B cell (primary cell): ENCODE measurements at regions of chr5 and their contacts with region 1.

Region 1: GRCh38 chr5:177351385-177352329 is at the start of gene LMAN2:
- DNase-seq: peak; percentile 97
- ATAC-seq: peak; percentile 99
- H3K4me3 ChIP-seq: peak within 1 kb of the TSS; percentile 85 to 97 (median 90)
- H3K4me3 Mint-ChIP-seq: peak within 1 kb of the TSS; percentile 96
- H3K27ac ChIP-seq: peak within 1 kb of the TSS; percentile 87 to 93
- H3K27ac Mint-ChIP-seq: peak within 1 kb of the TSS; percentile 100
- H3K4me1 ChIP-seq: peaks cover 32 to 38% of the 10 kb centered on the region in 2 donors
- H3K4me1 Mint-ChIP-seq: peaks cover 61% of the 10 kb centered on the region
- H3K27me3 ChIP-seq: no peaks in the 10 kb centered on the region
- H3K27me3 Mint-ChIP-seq: no peaks in the 10 kb centered on the region
- CTCF ChIP-seq: no peak
- total RNA-seq, gene LMAN2: 89.4 and 99.4 TPM in 2 replicates

Region 2: DNA sequence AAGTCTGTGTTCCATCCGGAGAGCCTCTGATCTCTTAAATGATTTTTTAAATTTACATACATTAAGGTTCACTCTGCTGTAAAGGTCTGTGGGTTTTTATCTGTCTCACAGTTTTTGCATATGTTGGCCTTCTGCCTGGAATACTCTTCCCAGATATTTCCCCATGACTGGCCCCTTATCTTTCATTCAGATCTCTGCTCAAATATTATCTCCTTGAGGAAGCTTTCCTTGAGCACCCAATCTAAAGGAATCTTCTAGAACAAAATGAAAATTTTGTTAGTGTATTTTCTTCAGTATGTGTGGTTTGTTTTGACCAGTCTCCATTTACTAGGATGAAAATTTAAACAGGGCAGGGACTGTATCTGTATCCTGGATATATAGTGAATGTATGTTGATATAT is 877.1 kb before region 1 on chr5:
- CTCF ChIA-PET with region 1: no interaction called
- POLR2A ChIA-PET with region 1: no interaction called
- intact Hi-C with region 1: no loop called
- DNase-seq: no peak
- ATAC-seq: no peak
- H3K4me3 ChIP-seq: no peak overlapping the region
- H3K4me3 Mint-ChIP-seq: no peak overlapping the region
- H3K27ac ChIP-seq: no peak overlapping the region
- H3K27ac Mint-ChIP-seq: no peak overlapping the region
- H3K4me1 ChIP-seq: no peaks in the 10 kb centered on the region
- H3K4me1 Mint-ChIP-seq: peaks cover 8% of the 10 kb centered on the region
- H3K27me3 ChIP-seq: no peaks in the 10 kb centered on the region
- H3K27me3 Mint-ChIP-seq: no peaks in the 10 kb centered on the region
- CTCF ChIP-seq: no peak

Region 3: GRCh38 chr5:177303121-177303924 is 48.3 kb before region 1 on chr5 and contains the starts of genes PRELID1 and RAB24:
- CTCF ChIA-PET with region 1: interaction called, 4 read pairs
- POLR2A ChIA-PET with region 1: interaction called, 3 read pairs
- intact Hi-C with region 1: loop called (anchors 1 kb)
- DNase-seq: peak; percentile 91
- ATAC-seq: peak; percentile 59
- H3K4me3 ChIP-seq: peak within 1 kb of the TSS; percentile 71 to 97 (median 91)
- H3K4me3 Mint-ChIP-seq: peak within 1 kb of the TSS; percentile 95
- H3K27ac ChIP-seq: peak within 1 kb of the TSS; percentile 45 to 81
- H3K27ac Mint-ChIP-seq: peak within 1 kb of the TSS; percentile 93
- H3K4me1 ChIP-seq: peaks cover 60 to 79% of the 10 kb centered on the region in 2 donors
- H3K4me1 Mint-ChIP-seq: peaks cover 76% of the 10 kb centered on the region
- H3K27me3 ChIP-seq: no peaks in the 10 kb centered on the region
- H3K27me3 Mint-ChIP-seq: no peaks in the 10 kb centered on the region
- CTCF ChIP-seq: peak; percentile 64
- total RNA-seq, gene PRELID1: 66.5 and 71.7 TPM in 2 replicates
- total RNA-seq, gene RAB24: 38.3 and 39.7 TPM in 2 replicates

Region 4: GRCh38 chr5:177362610-177363507 is 11.2 kb after region 1 on chr5:
- CTCF ChIA-PET with region 1: interaction called, 16 read pairs
- POLR2A ChIA-PET with region 1: interaction called, 14 read pairs
- intact Hi-C with region 1: no loop called
- DNase-seq: peak; percentile 75
- ATAC-seq: peak; percentile 77
- H3K4me3 ChIP-seq: peak overlapping the region in 4 of 5 experiments; percentile 35 to 52 (median 48)
- H3K4me3 Mint-ChIP-seq: peak overlapping the region; percentile 86
- H3K27ac ChIP-seq: peak overlapping the region; percentile 39 to 50
- H3K27ac Mint-ChIP-seq: peak overlapping the region; percentile 93
- H3K4me1 ChIP-seq: peaks cover 48 to 64% of the 10 kb centered on the region in 2 donors
- H3K4me1 Mint-ChIP-seq: peaks cover 63% of the 10 kb centered on the region
- H3K27me3 ChIP-seq: no peaks in the 10 kb centered on the region
- H3K27me3 Mint-ChIP-seq: no peaks in the 10 kb centered on the region
- CTCF ChIP-seq: no peak

Region 5: DNA sequence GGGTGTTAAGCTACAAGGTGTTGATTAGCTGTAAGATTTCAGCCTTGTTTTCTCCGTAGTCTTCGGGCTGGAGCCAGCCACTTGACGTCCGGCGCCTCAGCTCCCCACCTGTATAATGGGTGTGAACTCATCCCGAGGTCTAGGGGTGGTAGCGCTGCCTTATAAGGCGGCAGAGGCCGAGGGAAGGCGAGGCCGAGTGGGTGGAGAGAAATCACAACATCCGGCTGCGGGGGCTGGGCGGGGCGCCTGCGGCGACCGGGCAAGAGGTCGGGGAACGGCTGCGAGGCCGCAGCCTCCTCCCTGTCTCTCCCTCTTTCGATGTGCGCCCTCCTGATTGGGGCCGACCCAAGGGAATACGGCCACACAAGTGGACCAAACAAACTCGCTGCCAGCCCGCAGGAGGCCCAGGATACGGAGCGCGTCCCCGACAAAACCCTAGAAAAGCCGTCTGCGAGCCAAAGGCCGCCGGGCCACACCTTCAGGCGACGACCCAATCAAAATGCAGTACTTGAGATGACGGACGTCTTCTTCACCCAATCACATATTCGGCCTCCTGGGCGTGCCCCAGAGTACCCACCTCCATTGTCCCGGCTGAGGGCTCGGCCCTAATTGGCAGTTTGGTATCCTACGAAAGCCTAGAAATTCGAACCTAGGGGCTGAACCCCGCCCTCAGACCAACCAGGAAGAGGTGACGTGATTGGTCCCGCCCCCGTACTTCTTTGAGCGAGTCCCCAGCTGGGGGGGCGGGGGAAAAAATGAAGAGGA is 74.3 kb after region 1 on chr5:
- CTCF ChIA-PET with region 1: interaction called, 3 read pairs
- POLR2A ChIA-PET with region 1: interaction called, 3 read pairs
- intact Hi-C with region 1: loop called (anchors 1 kb)
- DNase-seq: peak; percentile 100
- ATAC-seq: peak; percentile 82
- H3K4me3 ChIP-seq: peak overlapping the region; percentile 28 to 74 (median 61)
- H3K4me3 Mint-ChIP-seq: peak overlapping the region; percentile 93
- H3K27ac ChIP-seq: peak overlapping the region; percentile 82 to 88
- H3K27ac Mint-ChIP-seq: peak overlapping the region; percentile 97
- H3K4me1 ChIP-seq: peaks cover 47 to 49% of the 10 kb centered on the region in 2 donors
- H3K4me1 Mint-ChIP-seq: peaks cover 49% of the 10 kb centered on the region
- H3K27me3 ChIP-seq: no peaks in the 10 kb centered on the region
- H3K27me3 Mint-ChIP-seq: no peaks in the 10 kb centered on the region
- CTCF ChIP-seq: no peak

Region 6: GRCh38 chr5:177599731-177600507 is 248.3 kb after region 1 on chr5 and contains the start of gene B4GALT7:
- CTCF ChIA-PET with region 1: interaction called, 3 read pairs
- POLR2A ChIA-PET with region 1: interaction called, 4 read pairs
- intact Hi-C with region 1: loop called (anchors 2 kb)
- DNase-seq: peak; percentile 88
- ATAC-seq: peak; percentile 88
- H3K4me3 ChIP-seq: peak within 1 kb of the TSS; percentile 61 to 87 (median 81)
- H3K4me3 Mint-ChIP-seq: peak within 1 kb of the TSS; percentile 95
- H3K27ac ChIP-seq: peak within 1 kb of the TSS; percentile 74 to 94
- H3K27ac Mint-ChIP-seq: peak within 1 kb of the TSS; percentile 94
- H3K4me1 ChIP-seq: peaks cover 13 to 27% of the 10 kb centered on the region in 2 donors
- H3K4me1 Mint-ChIP-seq: peaks cover 29% of the 10 kb centered on the region
- H3K27me3 ChIP-seq: no peaks in the 10 kb centered on the region
- H3K27me3 Mint-ChIP-seq: no peaks in the 10 kb centered on the region
- CTCF ChIP-seq: no peak
- total RNA-seq, gene B4GALT7: 38.9 and 41.8 TPM in 2 replicates